ENCODE measurements at regions of chr2 and their contacts with region 1.

Region 1: GRCh38 chr2:84832772-84833461 is 48.0 kb downstream of the TRABD2A start:
- DNase-seq: peak; percentile 48
- H3K4me3 Mint-ChIP-seq: peak overlapping the region; percentile 63
- H3K27ac Mint-ChIP-seq: peak overlapping the region; percentile 79
- H3K4me1 Mint-ChIP-seq: peaks cover 45% of the 10 kb centered on the region
- H3K27me3 Mint-ChIP-seq: no peaks in the 10 kb centered on the region

Region 2: DNA sequence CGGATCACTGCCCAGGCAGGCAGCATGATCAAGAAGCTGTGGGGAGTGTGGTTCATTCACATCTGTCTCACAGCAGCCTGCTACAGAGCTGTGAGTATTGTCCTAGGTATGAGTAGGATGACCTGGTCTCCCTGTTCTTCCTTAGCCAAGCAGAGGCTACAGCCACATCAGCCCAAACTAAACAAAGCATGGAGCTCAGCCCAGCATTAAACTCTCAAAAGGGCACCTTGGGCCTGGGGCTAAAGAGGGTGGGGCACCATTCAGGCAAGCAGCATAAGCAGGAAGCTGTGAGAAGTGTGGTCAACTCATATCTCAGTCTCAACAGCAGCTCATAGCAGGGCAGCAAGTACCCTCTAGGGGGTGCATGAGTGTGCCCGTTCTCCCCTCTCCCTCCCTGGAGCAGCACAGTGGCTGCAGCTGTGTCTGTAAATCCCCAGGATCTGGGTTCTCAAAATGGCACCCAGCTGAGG is 91.6 kb before region 1 on chr2:
- CTCF ChIA-PET with region 1: interaction called, 3 read pairs
- POLR2A ChIA-PET with region 1: no interaction called
- intact Hi-C with region 1: loop called (anchors 1 kb)
- DNase-seq: peak; percentile 75
- H3K4me3 Mint-ChIP-seq: no peak overlapping the region
- H3K27ac Mint-ChIP-seq: no peak overlapping the region
- H3K4me1 Mint-ChIP-seq: peaks cover 10% of the 10 kb centered on the region
- H3K27me3 Mint-ChIP-seq: no peaks in the 10 kb centered on the region

Region 3: DNA sequence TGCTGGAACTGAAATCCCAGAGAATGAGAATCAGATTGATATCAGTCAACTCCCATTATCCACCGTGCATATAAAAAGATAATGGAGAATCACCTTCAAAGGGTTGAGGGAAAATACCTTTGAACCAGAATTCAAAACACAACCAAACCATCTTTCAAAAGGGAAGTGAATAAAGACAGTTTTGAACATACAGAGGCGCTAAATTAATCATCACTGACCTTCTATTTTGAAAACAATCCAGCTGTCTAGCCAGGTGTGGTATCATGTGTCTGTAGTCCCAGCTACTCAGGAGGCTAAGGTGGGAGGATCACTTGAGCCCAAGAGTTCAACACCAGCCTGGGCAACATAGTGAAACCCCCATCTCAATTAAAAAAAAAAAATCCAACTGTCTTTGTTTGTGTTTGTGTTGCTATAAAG is 15.7 kb before region 1 on chr2:
- CTCF ChIA-PET with region 1: interaction called, 6 read pairs
- POLR2A ChIA-PET with region 1: interaction called, 3 read pairs
- intact Hi-C with region 1: loop called (anchors 1 kb)
- DNase-seq: peak; percentile 39
- H3K4me3 Mint-ChIP-seq: no peak overlapping the region
- H3K27ac Mint-ChIP-seq: no peak overlapping the region
- H3K4me1 Mint-ChIP-seq: peaks cover 31% of the 10 kb centered on the region
- H3K27me3 Mint-ChIP-seq: no peaks in the 10 kb centered on the region